Prostate gland (tissue), 2 donors: ENCODE measurements at regions of chr19 and their contacts with region 1.

Region 1: GRCh38 chr19:33771384-33772101 is 25.1 kb upstream of the KCTD15 start:
- DNase-seq: peak; percentile 72
- H3K4me3 ChIP-seq: no peak overlapping the region
- H3K27ac ChIP-seq: no peak overlapping the region
- H3K4me1 ChIP-seq: no peaks in the 10 kb centered on the region
- H3K27me3 ChIP-seq: no peaks in the 10 kb centered on the region
- CTCF ChIP-seq: peak; percentile 84 to 96 (median 90)
- POLR2A ChIP-seq: no peak

Region 2: GRCh38 chr19:33416307-33417215 is 355.0 kb before region 1 on chr19:
- intact Hi-C with region 1: loop called (anchors 5 kb)
- DNase-seq: peak; percentile 64
- H3K4me3 ChIP-seq: no peak overlapping the region
- H3K27ac ChIP-seq: no peak overlapping the region
- H3K4me1 ChIP-seq: no peaks in the 10 kb centered on the region
- H3K27me3 ChIP-seq: no peaks in the 10 kb centered on the region
- CTCF ChIP-seq: peak in 3 of 4 experiments; percentile 50 to 76 (median 59)
- POLR2A ChIP-seq: no peak

Region 3: DNA sequence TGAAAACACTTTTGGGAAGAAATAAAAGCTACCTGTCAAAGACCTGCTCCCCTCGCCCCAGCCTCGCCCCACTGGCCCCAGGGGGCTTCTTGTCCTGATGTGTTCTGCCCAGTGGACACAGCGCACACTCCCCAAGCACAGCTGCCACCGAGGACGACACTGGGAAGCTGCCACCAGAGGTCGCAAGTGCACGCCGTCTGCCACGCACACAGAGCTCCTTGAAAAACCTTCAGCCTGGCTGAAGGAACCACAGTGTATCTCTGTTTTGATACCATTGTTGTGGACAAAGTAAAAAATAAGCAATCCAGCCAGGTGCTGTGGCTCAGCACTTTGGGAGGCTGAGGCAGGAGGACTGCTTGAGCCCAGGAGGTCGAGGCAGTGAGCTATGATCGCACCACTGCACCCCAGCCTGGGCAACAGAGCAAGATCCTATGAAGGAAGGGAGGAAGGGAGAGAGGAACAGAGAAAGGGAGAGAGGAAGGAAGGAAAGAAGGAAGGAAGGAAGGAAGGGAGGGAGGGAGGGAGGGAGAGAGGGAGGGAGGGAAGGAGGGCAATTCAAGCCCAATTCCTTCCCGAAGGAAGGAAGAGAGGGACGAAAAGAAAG is 340.8 kb before region 1 on chr19:
- intact Hi-C with region 1: loop called (anchors 1 kb)
- DNase-seq: peak; percentile 69
- H3K4me3 ChIP-seq: no peak overlapping the region
- H3K27ac ChIP-seq: no peak overlapping the region
- H3K4me1 ChIP-seq: peaks cover 13% of the 10 kb centered on the region
- H3K27me3 ChIP-seq: no peaks in the 10 kb centered on the region
- CTCF ChIP-seq: peak; percentile 58 to 83 (median 80)
- POLR2A ChIP-seq: no peak